HCT116 (cell line): ENCODE measurements at regions of chr16 and their contacts with region 1.

Region 1: DNA sequence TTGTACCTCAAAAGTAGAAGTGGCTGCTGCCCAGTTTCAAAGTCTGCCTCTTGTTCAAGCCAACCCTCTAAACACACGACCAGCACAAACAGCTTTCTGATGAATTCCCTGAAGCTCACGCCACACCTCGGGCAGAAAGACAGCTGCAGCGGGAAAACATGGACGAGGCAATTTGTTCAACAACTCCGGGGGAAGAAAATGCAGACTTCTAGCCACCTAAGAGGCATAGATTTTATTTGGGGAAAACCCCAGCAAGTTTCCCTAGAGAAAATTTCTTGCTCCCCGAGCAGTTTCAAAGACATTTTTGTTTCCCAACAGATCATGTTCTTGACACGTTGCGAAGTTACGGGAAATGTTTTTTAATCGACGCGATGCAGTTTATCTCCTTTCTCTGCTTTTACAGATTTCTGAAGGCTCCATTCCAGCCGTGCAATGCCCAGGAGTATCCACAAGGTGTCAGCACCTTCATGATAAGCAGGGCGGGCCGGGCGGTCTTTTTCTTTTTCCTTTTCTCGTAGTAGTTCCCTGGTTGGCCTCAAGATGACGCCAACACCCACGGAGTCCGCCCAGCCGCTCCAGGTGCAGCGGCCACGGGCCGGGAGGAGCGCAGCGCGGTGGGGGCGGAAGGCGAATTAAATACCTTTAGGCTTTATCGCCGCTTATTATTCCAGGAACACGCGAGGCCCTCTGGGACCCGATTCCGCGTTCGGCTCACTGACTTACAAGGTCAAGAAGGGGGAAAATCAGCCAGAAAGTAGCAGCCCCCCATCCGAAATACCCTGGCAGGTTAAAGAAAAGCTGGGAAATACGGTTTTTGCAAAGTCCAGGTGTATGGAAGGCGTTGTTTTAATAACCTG is 2.9 kb upstream of the FOXC2 start:
- DNase-seq: peak; percentile 92
- ATAC-seq: peak; percentile 92
- H3K4me3 ChIP-seq: peak overlapping the region; percentile 40 to 43
- H3K27ac ChIP-seq: no peak overlapping the region
- H3K4me1 ChIP-seq: peaks cover 9 to 14% of the 10 kb centered on the region in 2 experiments
- H3K27me3 ChIP-seq: no peaks in the 10 kb centered on the region
- CTCF ChIP-seq: peak; percentile 100
- POLR2A ChIP-seq: no peak
- RAD21 ChIP-seq: peak; percentile 100

Region 2: GRCh38 chr16:86444261-86444660 is 119.5 kb before region 1 on chr16:
- CTCF ChIA-PET with region 1: no interaction called
- POLR2A ChIA-PET with region 1: no interaction called
- RAD21 ChIA-PET with region 1: no interaction called
- intact Hi-C with region 1: no loop called
- DNase-seq: no peak
- ATAC-seq: no peak
- H3K4me3 ChIP-seq: no peak overlapping the region
- H3K27ac ChIP-seq: no peak overlapping the region
- H3K4me1 ChIP-seq: no peaks in the 10 kb centered on the region
- H3K27me3 ChIP-seq: peaks cover 9% of the 10 kb centered on the region; the same call in 1 of the 2 replicates
- CTCF ChIP-seq: no peak
- POLR2A ChIP-seq: no peak
- RAD21 ChIP-seq: no peak

Region 3: DNA sequence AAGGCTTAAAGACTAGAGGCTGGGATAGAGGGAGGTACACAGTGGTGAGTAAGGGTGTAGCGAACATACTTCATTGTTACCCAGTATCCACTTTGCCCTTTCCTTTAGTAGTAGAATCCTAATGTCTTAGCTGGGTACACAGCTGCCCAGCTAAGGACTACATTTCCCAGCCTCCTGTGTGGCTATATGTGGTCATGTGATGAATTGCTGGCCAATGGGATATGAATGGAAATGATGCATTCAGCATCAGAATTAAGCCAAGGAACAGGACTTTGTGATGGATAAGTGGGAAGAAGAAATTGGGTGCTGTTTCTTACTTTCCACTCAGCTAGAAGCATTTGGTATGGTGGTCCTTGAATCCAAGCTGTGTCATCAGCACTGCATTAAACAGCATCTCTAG is 70.6 kb after region 1 on chr16:
- CTCF ChIA-PET with region 1: no interaction called
- POLR2A ChIA-PET with region 1: no interaction called
- RAD21 ChIA-PET with region 1: no interaction called
- intact Hi-C with region 1: no loop called
- DNase-seq: peak; percentile 48
- ATAC-seq: peak; percentile 92
- H3K4me3 ChIP-seq: no peak overlapping the region
- H3K27ac ChIP-seq: no peak overlapping the region
- H3K4me1 ChIP-seq: peaks cover 0 to 17% of the 10 kb centered on the region in 2 experiments; a peak in 1 of 4 replicates
- H3K27me3 ChIP-seq: no peaks in the 10 kb centered on the region
- CTCF ChIP-seq: no peak
- POLR2A ChIP-seq: no peak
- RAD21 ChIP-seq: no peak

Region 4: DNA sequence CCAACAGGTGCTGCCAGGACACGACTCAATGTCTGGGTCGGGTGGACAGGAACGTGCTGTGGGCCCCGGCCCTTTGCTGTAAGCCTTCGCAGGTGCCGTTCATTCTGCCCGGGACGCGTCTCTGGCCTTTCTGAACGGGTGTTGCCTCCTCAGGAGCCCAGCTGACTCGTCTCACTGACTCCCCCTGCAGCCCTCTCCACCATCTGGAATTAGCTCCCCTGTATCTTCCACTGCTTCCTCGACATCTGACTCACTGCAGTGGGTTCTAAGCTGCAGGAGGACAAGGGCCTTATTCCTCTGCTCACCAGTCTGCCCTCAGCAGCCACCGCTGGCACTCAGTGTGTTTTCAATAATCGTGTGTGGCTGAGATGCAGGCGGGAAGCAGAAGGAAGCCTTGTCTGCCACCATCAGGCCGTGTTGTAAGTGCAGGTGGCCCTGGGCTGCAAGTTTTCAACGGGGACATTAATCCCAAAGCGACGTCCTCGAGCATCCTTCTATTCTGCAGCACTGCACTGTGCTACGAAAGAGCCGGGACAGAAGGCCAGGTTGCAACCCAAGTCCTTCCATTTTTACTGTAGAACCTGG is 270.8 kb after region 1 on chr16:
- CTCF ChIA-PET with region 1: interaction called, 13 read pairs
- POLR2A ChIA-PET with region 1: no interaction called
- RAD21 ChIA-PET with region 1: no interaction called
- intact Hi-C with region 1: loop called (anchors 1 kb)
- DNase-seq: no peak
- ATAC-seq: peak; percentile 86
- H3K4me3 ChIP-seq: no peak overlapping the region
- H3K27ac ChIP-seq: no peak overlapping the region
- H3K4me1 ChIP-seq: 0 out of 4 replicates have a peak, but pooled peaks cover 0 to 4% of the 10 kb centered on the region in 2 experiments
- H3K27me3 ChIP-seq: peaks cover 23% of the 10 kb centered on the region
- CTCF ChIP-seq: peak; percentile 48 to 81 (median 63)
- POLR2A ChIP-seq: no peak
- RAD21 ChIP-seq: peak; percentile 59

Region 5: GRCh38 chr16:87062569-87063442 is 499.1 kb after region 1 on chr16:
- CTCF ChIA-PET with region 1: interaction called, 89 read pairs
- POLR2A ChIA-PET with region 1: interaction called, 5 read pairs
- RAD21 ChIA-PET with region 1: interaction called, 14 to 21 read pairs
- intact Hi-C with region 1: loop called (anchors 1 kb)
- DNase-seq: peak; percentile 62
- ATAC-seq: peak; percentile 99
- H3K4me3 ChIP-seq: peak overlapping the region; percentile 29 to 35
- H3K27ac ChIP-seq: no peak overlapping the region
- H3K4me1 ChIP-seq: peaks cover 0 to 9% of the 10 kb centered on the region in 2 experiments; a peak in 2 of 4 replicates
- H3K27me3 ChIP-seq: no peaks in the 10 kb centered on the region
- CTCF ChIP-seq: peak; percentile 95 to 100 (median 97)
- POLR2A ChIP-seq: no peak
- RAD21 ChIP-seq: peak; percentile 95

Region 6: DNA sequence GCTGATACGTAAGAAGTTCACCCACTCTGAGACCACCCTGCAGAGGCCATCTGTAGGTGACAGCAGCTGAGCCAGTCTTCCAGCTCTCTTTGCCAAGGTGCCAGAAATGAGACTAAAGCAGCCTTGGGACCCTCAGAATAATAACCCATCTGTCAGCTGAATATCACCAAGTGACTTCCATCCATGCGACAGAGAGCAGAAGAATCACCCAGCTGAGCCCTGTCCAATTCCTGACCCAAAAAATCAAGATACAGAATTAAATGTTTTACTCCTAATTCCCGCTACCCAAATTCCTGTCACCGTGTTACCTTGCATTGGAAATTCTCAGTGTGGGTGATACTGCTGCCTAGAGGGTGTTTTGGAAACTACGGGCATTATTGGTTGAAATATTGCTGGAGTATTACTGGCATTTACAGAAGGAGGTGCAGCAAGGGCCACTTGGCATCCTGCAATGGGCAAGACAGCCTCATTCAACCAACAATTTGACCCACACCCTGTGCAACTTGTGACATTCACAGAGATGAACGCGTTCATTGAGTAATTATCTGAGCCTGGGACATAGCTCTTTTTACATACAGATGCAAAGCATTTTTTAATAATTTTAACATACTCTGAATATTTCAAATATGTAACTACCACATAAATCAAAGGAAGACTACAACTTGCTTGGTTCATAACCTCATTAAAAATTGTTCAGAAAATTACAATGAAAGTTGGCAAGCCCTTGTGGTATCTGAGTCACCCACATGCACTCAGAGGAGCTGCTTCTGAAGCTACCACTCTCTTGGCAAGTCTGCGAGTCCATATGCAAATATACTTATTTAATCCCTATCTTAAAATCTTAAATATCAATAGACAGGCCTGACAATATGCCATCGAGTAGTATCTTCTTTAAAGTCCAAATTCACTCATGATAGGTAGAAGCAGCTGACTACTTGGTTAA is 626.8 kb after region 1 on chr16:
- CTCF ChIA-PET with region 1: interaction called, 9 read pairs
- POLR2A ChIA-PET with region 1: no interaction called
- RAD21 ChIA-PET with region 1: no interaction called
- intact Hi-C with region 1: loop called (anchors 1 kb)
- DNase-seq: peak; percentile 10
- ATAC-seq: peak; percentile 82
- H3K4me3 ChIP-seq: no peak overlapping the region
- H3K27ac ChIP-seq: no peak overlapping the region
- H3K4me1 ChIP-seq: no peaks in the 10 kb centered on the region
- H3K27me3 ChIP-seq: no peaks in the 10 kb centered on the region
- CTCF ChIP-seq: peak; percentile 66 to 73 (median 67); a peak in 5 of 6 replicates
- POLR2A ChIP-seq: no peak
- RAD21 ChIP-seq: peak; percentile 75

Region 7: DNA sequence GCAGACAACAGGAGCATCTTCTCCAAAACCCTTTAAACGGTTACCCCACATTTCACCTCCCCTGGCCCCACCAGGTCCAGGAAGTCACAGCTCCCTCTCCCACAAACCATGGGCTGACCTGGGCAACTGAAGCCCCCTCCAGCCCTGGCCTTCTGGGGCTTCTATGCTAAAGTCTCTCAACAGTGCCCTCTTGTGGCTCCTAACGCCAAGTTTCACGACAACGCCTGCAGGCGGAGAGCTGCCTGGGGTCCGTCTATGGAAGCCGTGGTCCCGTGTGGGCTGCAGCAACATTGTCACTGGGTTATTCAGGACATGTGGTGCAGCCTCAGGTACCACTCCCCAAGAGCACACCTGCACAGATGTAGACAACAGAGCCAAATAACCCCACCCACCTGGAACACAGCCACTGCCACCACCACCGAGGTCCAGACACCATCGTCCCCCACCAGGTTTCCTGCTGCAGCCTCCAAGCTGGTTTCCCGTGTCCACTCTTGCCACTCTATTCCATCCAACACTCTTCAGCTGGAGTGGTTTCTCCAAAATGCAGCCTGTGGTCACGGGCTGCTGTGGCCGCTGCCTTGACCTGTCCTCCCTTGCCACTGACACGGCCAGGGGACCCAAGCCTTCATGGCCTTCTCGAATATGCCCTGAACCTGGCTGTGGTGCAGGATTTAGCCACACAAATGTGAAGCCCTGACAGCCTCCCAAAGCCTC is 734.4 kb after region 1 on chr16:
- CTCF ChIA-PET with region 1: interaction called, 7 read pairs
- POLR2A ChIA-PET with region 1: no interaction called
- RAD21 ChIA-PET with region 1: no interaction called
- intact Hi-C with region 1: loop called (anchors 1 kb)
- DNase-seq: no peak
- ATAC-seq: peak; percentile 68
- H3K4me3 ChIP-seq: no peak overlapping the region
- H3K27ac ChIP-seq: no peak overlapping the region
- H3K4me1 ChIP-seq: peaks cover 4 to 10% of the 10 kb centered on the region in 2 experiments; a peak in 3 of 4 replicates
- H3K27me3 ChIP-seq: no peaks in the 10 kb centered on the region
- CTCF ChIP-seq: peak; percentile 60 to 89 (median 83)
- POLR2A ChIP-seq: no peak
- RAD21 ChIP-seq: peak; percentile 53